Dorsolateral prefrontal cortex (tissue), 120 donors: ENCODE measurements at regions of chr9 and their contacts with region 1.

Region 1: DNA sequence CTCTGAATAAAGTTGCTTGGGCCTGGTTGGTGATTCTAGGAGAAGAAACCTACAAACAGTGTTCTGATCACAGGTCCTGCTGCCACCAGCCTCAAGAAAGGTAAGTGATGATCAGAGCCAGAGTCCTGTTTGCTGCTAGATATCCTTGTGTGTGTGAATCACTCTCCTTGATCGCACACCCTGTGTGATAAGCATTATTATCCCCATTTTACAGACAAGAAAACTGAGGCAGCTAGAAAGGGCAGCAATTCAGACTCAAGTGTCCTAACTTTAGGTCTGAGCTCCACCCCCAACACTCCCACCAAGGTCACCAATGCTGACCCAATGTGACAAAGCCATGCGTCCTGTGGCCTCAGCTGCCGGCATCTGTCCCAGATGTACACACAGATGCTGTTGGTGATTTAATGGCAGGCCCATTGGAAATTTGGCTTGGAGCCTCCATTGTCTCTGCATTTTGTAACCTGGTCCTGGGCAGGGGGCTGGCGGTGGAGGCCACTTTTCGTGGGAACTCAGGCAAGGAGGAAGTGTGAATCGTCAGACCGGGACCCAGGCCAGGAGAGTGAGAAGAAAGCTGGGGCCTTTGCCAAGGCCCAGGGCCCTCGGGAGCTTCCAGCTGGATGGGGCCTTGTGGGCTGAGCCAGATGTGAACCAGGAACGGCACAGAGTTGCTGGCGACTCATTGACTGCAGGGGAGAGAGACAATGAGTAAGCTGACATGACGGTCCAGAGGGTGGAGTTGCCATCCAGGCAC is 29.8 kb upstream of the GGTA1 start:
- DNase-seq: peak in 9 of 10 donors; percentile 28 to 77 (median 63)
- H3K4me3 ChIP-seq: no peak overlapping the region
- H3K27ac ChIP-seq: no peak overlapping the region
- H3K27me3 ChIP-seq: no peaks in the 10 kb centered on the region
- CTCF ChIP-seq: no peak

Region 2: DNA sequence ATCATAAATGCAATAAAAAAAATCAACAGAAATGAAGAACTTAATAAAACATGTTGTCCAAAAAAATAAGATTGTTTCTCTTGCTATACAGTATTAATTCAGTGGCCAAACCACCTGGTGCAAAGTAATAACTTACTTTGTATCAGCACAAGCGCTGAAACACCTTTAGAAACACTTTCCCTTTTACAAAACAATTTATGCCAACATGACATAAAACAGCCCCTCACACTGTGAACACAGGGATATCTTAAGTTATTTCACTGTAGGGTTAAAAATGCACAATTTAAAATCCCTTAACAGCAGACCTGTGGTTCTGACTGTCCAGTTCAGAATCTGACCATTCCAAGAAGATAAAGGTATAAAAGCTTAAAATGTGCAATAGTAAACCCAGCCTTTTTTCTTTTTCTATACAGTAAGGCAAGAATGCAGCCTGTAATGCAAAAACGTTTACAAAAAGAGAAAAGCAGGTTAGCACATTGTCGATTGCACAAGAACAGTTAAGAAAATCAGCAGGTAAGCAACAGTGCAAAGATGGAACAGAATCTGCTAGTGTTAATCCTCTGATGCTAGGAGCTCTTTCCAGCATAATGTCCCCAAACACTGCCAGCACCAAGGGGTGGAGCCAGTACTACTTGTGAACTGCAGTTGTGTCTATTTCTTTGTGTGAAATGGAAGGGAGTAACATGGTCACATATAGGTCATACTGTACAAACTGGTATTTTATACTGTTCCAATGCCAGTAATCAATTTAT is 349.3 kb before region 1 on chr9:
- intact Hi-C with region 1: no loop called
- DNase-seq: peak in 1 of 10 donors; percentile 40
- H3K4me3 ChIP-seq: no peak overlapping the region
- H3K27ac ChIP-seq: peak overlapping the region in 27 of 59 donors; percentile 7 to 53 (median 28)
- H3K27me3 ChIP-seq: no peaks in the 10 kb centered on the region
- CTCF ChIP-seq: no peak

Region 3: GRCh38 chr9:121581786-121582600 is 52.6 kb after region 1 on chr9:
- intact Hi-C with region 1: loop called in 1 of 2 experiments (anchors 10 kb)
- DNase-seq: peak in 9 of 10 donors; percentile 52 to 82 (median 77)
- H3K4me3 ChIP-seq: peak overlapping the region in 30 of 59 donors; percentile 3 to 54 (median 30)
- H3K27ac ChIP-seq: peak overlapping the region in 34 of 59 donors; percentile 1 to 74 (median 47)
- H3K27me3 ChIP-seq: no peaks in the 10 kb centered on the region
- CTCF ChIP-seq: peak in 2 of 56 donors; percentile 10 to 11